Ascending aorta (tissue), 2 donors: ENCODE measurements at regions of chr21 and their contacts with region 1.

Region 1: DNA sequence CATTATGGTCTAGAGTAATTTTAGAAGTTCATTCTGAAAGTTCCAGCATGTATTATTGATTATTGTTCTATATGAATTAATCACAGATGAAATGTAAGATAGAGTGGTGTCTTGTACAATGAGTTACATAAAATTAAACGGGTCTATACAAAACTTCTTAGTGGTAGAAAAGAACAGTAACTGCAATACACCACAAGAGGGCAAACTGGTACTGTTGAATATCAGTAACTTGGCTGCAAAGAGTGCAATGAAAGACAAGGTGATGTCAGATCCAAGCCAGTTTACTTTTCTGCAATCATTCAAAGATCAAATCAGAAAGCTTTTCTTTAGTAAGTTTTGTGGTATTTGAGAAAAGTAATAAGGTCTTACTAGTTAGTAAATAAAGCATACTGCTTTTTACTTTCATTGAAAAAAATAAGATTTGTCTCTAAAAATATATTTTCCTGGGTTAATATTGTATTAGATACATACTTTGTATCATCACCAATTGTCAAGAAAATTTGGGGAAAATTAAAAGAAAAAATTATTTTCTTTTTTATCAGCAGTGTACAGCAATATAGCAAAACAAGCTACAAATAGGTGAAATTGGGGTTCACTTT is 66.4 kb upstream of the BTG3 start:
- DNase-seq: no peak
- H3K4me3 ChIP-seq: no peak overlapping the region
- H3K27ac ChIP-seq: no peak overlapping the region
- H3K4me1 ChIP-seq: no peaks in the 10 kb centered on the region
- H3K27me3 ChIP-seq: no peaks in the 10 kb centered on the region
- CTCF ChIP-seq: peak; percentile 66 to 73 (median 69)

Region 2: GRCh38 chr21:17631195-17631594 is 47.9 kb before region 1 on chr21:
- intact Hi-C with region 1: no loop called
- DNase-seq: no peak
- H3K4me3 ChIP-seq: no peak overlapping the region
- H3K27ac ChIP-seq: no peak overlapping the region
- H3K4me1 ChIP-seq: no peaks in the 10 kb centered on the region
- H3K27me3 ChIP-seq: no peaks in the 10 kb centered on the region
- CTCF ChIP-seq: no peak

Region 3: DNA sequence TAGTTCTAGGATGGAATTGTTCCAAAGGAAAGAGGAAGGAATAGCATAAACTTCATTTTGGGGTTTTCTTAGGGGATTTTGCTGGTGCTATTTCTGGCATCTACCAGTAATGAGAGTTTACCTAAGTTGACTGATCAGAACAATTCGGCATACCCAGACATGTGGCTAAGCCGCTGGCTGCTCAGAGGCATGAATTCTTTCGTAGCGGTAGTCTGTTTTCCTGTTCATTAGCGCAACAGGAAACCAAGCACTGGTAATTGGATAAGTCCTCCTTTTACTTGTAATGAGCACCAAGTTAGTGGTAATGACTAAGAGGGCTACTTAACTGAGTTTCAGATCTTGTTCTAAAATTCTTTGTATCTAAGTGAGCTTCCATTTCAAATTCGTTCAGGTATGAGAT is 101.4 kb after region 1 on chr21:
- intact Hi-C with region 1: no loop called
- DNase-seq: no peak
- H3K4me3 ChIP-seq: no peak overlapping the region
- H3K27ac ChIP-seq: no peak overlapping the region
- H3K4me1 ChIP-seq: no peaks in the 10 kb centered on the region
- H3K27me3 ChIP-seq: no peaks in the 10 kb centered on the region
- CTCF ChIP-seq: no peak

Region 4: DNA sequence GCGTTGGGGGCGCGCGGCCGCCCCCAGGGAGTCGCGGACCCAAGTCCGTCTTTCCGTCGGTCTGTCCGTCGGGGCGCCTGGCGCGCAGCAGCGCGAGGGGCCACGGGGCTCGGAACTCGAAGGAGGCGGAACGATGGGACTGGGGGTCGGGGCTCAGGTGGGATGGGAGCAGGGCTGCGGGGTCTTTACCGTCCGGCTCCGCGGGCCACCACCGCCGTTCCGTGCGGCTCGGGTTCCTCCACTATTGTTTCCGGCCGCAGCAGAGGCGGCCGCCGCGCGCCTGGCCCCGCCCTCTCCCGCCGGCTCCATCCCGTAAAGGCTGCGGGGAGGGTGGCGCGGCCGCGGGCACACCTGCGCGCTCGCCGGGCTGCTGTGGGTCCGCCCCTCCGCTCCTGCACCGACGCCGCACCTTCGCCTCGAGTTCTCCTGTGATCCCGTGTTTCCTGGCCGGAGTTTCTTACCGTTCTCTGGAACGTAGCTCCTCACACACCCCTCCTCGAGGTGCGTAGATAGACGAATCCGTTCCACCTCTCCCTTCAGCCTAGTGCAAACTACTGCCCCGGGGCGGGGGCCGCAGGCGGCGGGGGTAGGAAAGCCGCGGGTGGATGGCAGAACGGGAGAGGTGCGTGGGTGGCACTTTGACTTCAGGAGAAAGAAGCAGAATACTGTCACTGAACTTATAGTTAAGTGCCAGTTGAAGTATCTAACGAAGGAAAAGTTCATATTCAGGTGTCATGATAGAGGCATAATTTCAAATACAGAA is 140.2 kb after region 1 on chr21 and contains the start of gene C21orf91:
- intact Hi-C with region 1: loop called (anchors 10 kb)
- DNase-seq: peak; percentile 56 to 93
- H3K4me3 ChIP-seq: peak within 1 kb of the TSS; percentile 80 to 81
- H3K27ac ChIP-seq: peak within 1 kb of the TSS; percentile 80 to 85
- H3K4me1 ChIP-seq: peaks cover 0 to 4% of the 10 kb centered on the region in 2 donors
- H3K27me3 ChIP-seq: no peaks in the 10 kb centered on the region
- CTCF ChIP-seq: no peak
- total RNA-seq, gene C21orf91: 11.3 TPM

Region 5: GRCh38 chr21:17903029-17903806 is 224.1 kb after region 1 on chr21:
- intact Hi-C with region 1: loop called (anchors 1 kb)
- DNase-seq: no peak
- H3K4me3 ChIP-seq: no peak overlapping the region
- H3K27ac ChIP-seq: no peak overlapping the region
- H3K4me1 ChIP-seq: no peaks in the 10 kb centered on the region
- H3K27me3 ChIP-seq: no peaks in the 10 kb centered on the region
- CTCF ChIP-seq: peak in 2 of 3 experiments; percentile 9 to 21

Region 6: DNA sequence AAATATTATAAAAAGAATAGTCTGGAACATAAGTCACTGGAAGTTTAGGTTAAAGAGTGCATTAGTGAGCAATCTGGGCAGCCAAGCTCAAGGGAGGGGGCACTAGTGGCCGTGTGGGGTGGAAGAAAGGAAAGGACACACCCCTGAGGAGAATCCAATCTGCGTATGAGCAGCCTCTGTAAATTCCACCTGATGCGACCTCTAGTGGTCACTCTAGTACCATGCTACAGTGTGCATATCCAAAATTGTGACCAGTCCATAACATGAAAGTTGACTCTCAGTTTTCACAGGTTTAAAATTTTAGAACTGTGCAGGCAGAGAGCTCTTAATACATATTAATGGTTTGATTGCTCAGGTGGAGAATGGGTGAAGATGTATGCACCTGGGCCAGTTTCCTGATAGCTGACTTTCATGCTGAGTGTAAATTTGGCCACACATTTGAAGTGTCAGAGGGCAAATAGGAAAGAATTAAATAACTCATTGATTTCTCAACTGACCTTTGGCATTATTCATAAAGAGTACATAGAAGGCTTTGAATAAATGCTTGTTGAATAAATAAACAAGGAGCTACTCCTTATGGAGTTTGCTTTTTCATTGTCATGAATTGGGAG is 246.0 kb after region 1 on chr21:
- intact Hi-C with region 1: loop called (anchors 1 kb)
- DNase-seq: peak in 1 of 2 donors; percentile 67
- H3K4me3 ChIP-seq: no peak overlapping the region
- H3K27ac ChIP-seq: no peak overlapping the region
- H3K4me1 ChIP-seq: no peaks in the 10 kb centered on the region
- H3K27me3 ChIP-seq: no peaks in the 10 kb centered on the region
- CTCF ChIP-seq: peak; percentile 39 to 85 (median 76)